A549 (cell line): ENCODE measurements at regions of chr12 and their contacts with region 1.

Region 1: DNA sequence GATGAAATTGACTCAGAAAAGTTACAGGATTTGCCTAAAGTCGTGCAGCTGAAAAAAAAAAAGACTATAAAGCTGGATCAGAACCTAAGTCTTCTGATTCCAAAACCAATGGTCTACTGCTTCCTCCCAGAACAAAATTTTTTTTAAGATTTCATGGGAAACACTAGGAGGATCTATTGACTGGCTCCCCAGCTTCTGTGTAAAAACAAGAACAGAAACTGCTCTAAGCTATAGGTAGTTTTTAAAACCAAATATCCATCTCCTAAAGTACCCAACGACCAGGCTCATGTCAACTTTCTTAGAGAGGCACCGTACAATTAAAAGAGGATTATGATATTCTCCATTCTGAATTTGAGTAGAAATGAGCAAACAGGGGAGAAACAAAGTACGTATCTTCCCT is 9.4 kb downstream of the FMNL3 start:
- DNase-seq: no peak
- ATAC-seq: no peak
- H3K4me3 ChIP-seq: no peak overlapping the region
- H3K27ac ChIP-seq: no peak overlapping the region
- H3K4me1 ChIP-seq: 0 out of 3 replicates have a peak, but pooled peaks cover 4% of the 10 kb centered on the region
- CTCF ChIP-seq: no peak
- EP300 ChIP-seq: no peak
- POLR2A ChIP-seq: no peak
- RAD21 ChIP-seq: no peak

Region 2: DNA sequence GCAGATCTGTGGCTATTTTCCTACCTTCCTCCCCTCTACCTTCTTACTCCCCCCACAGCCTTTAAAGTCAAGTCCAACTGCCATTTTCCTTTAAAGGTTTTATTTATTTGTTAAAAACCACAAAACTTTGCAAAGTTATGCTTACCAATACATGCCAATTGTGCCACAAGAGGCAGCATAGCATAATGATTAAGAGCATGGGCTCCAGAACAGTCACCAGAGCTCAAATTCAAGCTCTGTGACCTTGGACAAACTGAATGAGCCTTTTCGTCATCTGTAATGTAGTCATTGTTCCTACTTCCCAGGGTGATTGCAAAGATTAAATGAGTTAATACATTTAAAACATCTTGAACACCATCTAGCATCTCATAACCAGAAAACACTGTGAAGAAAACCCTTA is 22.4 kb after region 1 on chr12:
- CTCF ChIA-PET with region 1: interaction called, 10 read pairs
- POLR2A ChIA-PET with region 1: no interaction called
- DNase-seq: no peak
- ATAC-seq: peak; percentile 66 to 77; a peak in 5 of 6 replicates
- H3K4me3 ChIP-seq: no peak overlapping the region
- H3K27ac ChIP-seq: no peak overlapping the region
- H3K4me1 ChIP-seq: no peaks in the 10 kb centered on the region
- CTCF ChIP-seq: no peak
- EP300 ChIP-seq: no peak
- POLR2A ChIP-seq: no peak
- RAD21 ChIP-seq: peak in 1 of 2 experiments; percentile 9; a peak in 1 of 5 replicates

Region 3: GRCh38 chr12:49783917-49784676 is 86.3 kb after region 1 on chr12:
- CTCF ChIA-PET with region 1: no interaction called
- POLR2A ChIA-PET with region 1: no interaction called
- DNase-seq: no peak
- ATAC-seq: no peak
- H3K4me3 ChIP-seq: no peak overlapping the region
- H3K27ac ChIP-seq: peak overlapping the region in 1 of 2 experiments; percentile 57; a peak in 4 of 6 replicates
- H3K4me1 ChIP-seq: peaks cover 17% of the 10 kb centered on the region
- CTCF ChIP-seq: no peak
- EP300 ChIP-seq: no peak
- POLR2A ChIP-seq: no peak
- RAD21 ChIP-seq: no peak